Sigmoid colon (tissue), 7 donors: ENCODE measurements at regions of chr7 and their contacts with region 1.

Region 1: GRCh38 chr7:114085592-114086501 is 167.0 kb upstream of the PPP1R3A start:
- DNase-seq: peak; percentile 96
- H3K4me3 ChIP-seq: peak overlapping the region; percentile 74 to 87 (median 82)
- H3K27ac ChIP-seq: peak overlapping the region; percentile 93 to 97 (median 96)
- H3K4me1 ChIP-seq: peaks cover 0 to 34% (median 16%) of the 10 kb centered on the region in 4 donors
- H3K27me3 ChIP-seq: peaks cover 0 to 10% (median 0%) of the 10 kb centered on the region in 3 donors
- CTCF ChIP-seq: no peak
- EP300 ChIP-seq: peak in 3 of 4 donors; percentile 3 to 74 (median 61)
- POLR2A ChIP-seq: peak; percentile 77 to 88

Region 2: GRCh38 chr7:113976508-113976907 is 109.3 kb before region 1 on chr7:
- intact Hi-C with region 1: no loop called
- DNase-seq: no peak
- H3K4me3 ChIP-seq: no peak overlapping the region
- H3K27ac ChIP-seq: no peak overlapping the region
- H3K4me1 ChIP-seq: no peaks in the 10 kb centered on the region
- H3K27me3 ChIP-seq: no peaks in the 10 kb centered on the region
- CTCF ChIP-seq: no peak
- EP300 ChIP-seq: no peak
- POLR2A ChIP-seq: no peak

Region 3: GRCh38 chr7:114414156-114415063 is 328.6 kb after region 1 on chr7 and contains the start of gene FOXP2:
- intact Hi-C with region 1: loop called (anchors 2 kb)
- DNase-seq: no peak
- H3K4me3 ChIP-seq: peak within 1 kb of the TSS; percentile 31 to 55 (median 50)
- H3K27ac ChIP-seq: peak within 1 kb of the TSS; percentile 79 to 91 (median 85)
- H3K4me1 ChIP-seq: peaks cover 0 to 29% (median 17%) of the 10 kb centered on the region in 4 donors
- H3K27me3 ChIP-seq: no peaks in the 10 kb centered on the region
- CTCF ChIP-seq: no peak
- EP300 ChIP-seq: peak in 1 of 4 donors; percentile 3
- POLR2A ChIP-seq: no peak
- total RNA-seq, gene FOXP2: 91.2 to 150 (median 102) TPM

Region 4: GRCh38 chr7:114663502-114663901 is 577.7 kb after region 1 on chr7:
- intact Hi-C with region 1: loop called (anchors 5 kb)
- DNase-seq: no peak
- H3K4me3 ChIP-seq: no peak overlapping the region
- H3K27ac ChIP-seq: no peak overlapping the region
- H3K4me1 ChIP-seq: peaks cover 0 to 37% (median 29%) of the 10 kb centered on the region in 4 donors
- H3K27me3 ChIP-seq: no peaks in the 10 kb centered on the region
- CTCF ChIP-seq: peak in 1 of 4 experiments; percentile 25
- EP300 ChIP-seq: no peak
- POLR2A ChIP-seq: no peak

Region 5: DNA sequence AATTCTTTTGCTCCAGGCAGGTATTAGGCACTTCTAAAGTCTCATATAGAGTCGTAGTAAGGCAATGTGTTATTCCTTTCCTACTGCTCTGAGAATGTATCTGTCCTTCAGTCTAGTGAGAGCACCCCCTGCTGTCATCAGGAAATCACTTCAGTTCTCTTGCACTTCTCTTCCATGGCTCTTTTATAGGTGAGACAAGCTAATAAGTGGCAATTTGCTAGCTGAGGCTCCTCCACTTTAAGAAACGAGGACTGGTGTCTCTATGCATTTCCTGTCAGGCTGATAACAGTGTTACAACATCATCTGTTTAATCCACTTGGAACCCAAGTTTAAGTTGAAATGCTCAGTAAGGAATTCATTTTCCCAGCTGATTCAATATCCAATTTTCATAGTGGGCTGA is 1594.1 kb after region 1 on chr7:
- intact Hi-C with region 1: loop called (anchors 5 kb)
- DNase-seq: no peak
- H3K4me3 ChIP-seq: no peak overlapping the region
- H3K27ac ChIP-seq: no peak overlapping the region
- H3K4me1 ChIP-seq: peaks cover 0 to 35% (median 15%) of the 10 kb centered on the region in 4 donors
- H3K27me3 ChIP-seq: no peaks in the 10 kb centered on the region
- CTCF ChIP-seq: peak in 1 of 4 experiments; percentile 26
- EP300 ChIP-seq: no peak
- POLR2A ChIP-seq: no peak

Region 6: DNA sequence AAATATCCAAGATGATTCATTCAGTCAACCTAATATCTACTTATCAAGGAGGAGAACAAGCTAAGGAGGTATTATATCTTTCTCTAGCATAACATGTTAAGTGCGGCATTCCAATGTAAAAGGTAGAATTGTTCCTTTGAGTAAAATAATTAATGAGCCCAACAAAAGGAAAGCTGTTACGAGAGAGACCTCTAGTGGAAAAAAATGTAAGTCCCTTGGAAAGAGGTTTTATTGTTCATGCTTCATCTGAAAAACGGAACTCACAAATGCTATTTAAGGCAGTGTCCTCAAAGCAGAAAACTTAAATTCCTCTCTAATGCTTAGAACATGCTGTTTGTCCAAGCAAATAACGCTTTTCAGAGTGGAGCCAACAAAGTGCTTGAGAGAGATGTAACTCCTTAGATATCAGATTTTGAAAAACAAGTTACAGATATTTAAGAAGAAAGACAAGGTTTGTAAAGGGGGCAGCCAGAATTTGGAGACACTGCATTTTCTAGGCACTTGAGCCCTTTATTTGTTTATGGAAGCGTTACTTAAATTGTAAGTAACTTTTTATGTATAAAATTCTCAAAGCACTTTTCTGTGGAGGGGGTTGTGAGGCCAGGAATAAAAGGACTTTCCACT is 1824.8 kb after region 1 on chr7:
- intact Hi-C with region 1: loop called (anchors 5 kb)
- DNase-seq: no peak
- H3K4me3 ChIP-seq: no peak overlapping the region
- H3K27ac ChIP-seq: no peak overlapping the region
- H3K4me1 ChIP-seq: peaks cover 0 to 8% (median 3%) of the 10 kb centered on the region in 4 donors
- H3K27me3 ChIP-seq: no peaks in the 10 kb centered on the region
- CTCF ChIP-seq: peak; percentile 21 to 53 (median 45)
- EP300 ChIP-seq: no peak
- POLR2A ChIP-seq: no peak